Panc1 (cell line): ENCODE measurements at regions of chr19 and their contacts with region 1.

Region 1: DNA sequence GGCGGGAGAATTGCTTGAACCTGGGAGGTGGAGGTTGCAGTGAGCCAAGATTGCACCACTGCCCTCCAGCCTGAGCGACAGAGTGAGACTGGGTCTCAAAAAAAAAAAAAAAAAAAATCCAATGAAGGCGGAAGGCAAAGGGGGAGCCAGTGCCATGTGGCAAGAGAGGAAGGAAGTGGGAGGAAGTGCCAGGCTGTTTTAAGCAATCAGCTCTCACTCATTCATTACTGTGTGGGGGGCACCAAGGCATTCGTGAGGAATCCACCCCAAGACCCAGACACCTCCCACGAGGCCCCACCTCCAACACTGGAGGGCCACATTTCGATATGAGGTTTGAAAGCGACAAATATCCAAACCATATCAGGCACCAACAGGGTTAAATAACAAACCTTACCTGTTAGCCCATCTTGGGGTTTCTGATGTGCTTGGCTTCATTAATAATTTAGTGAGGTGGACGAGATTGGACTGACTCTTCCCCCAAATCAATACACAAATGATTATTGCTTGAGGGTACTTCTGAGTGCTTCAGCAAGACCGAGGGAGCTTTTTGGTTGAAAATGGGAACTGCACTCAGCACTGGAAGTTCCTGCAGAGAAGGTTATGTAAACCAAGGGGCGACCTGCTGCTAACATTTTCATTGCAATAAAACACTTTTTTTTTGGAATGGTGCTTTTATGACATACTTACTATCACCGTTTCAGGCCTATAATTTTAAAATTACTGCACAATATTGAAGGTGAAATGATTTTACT is 7.5 kb upstream of the LRP3 start:
- DNase-seq: no peak
- ATAC-seq: no peak
- H3K4me3 ChIP-seq: no peak overlapping the region
- H3K27ac ChIP-seq: no peak overlapping the region
- H3K4me1 ChIP-seq: peaks cover 4% of the 10 kb centered on the region
- H3K27me3 ChIP-seq: no peaks in the 10 kb centered on the region
- CTCF ChIP-seq: no peak

Region 2: GRCh38 chr19:33125929-33126388 is 60.6 kb before region 1 on chr19:
- CTCF ChIA-PET with region 1: interaction called, 15 read pairs
- POLR2A ChIA-PET with region 1: no interaction called
- in situ Hi-C with region 1: no loop called
- intact Hi-C with region 1: no loop called
- DNase-seq: peak; percentile 58
- ATAC-seq: peak; percentile 92
- H3K4me3 ChIP-seq: no peak overlapping the region
- H3K27ac ChIP-seq: peak overlapping the region; percentile 36; the same call in 1 of the 2 replicates
- H3K4me1 ChIP-seq: 0 out of 2 replicates have a peak, but pooled peaks cover 3% of the 10 kb centered on the region
- H3K27me3 ChIP-seq: no peaks in the 10 kb centered on the region
- CTCF ChIP-seq: peak; percentile 97

Region 3: DNA sequence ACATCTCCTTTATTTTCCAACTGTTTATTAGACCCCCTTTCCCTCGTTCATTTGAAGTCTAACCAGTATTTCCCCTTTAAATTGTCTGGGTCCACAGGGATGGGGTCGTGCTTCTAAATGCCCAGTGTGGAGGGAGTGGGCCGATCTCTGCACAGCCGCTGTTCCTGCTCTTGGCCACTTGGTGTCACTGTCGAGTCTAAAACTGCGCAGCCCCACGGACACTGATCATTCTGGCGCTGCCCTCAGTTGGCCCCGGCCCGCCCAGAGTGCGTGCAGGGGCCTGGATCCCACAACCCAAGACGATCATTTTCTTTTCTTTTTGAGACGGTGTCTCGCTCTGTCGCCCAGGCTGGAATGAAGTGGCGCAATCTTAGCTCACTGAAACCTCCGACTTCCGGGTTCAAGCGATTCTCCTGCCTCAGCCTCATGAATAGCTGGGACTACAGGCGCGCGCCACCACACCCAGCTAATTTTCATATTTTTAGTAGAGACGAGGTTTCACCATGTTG is 42.7 kb before region 1 on chr19:
- CTCF ChIA-PET with region 1: interaction called, 27 read pairs
- POLR2A ChIA-PET with region 1: no interaction called
- in situ Hi-C with region 1: no loop called
- intact Hi-C with region 1: loop called (anchors 1 kb)
- DNase-seq: peak; percentile 50
- ATAC-seq: peak; percentile 96
- H3K4me3 ChIP-seq: peak overlapping the region; percentile 15 to 50; a peak in 3 of 4 replicates
- H3K27ac ChIP-seq: peak overlapping the region; percentile 12
- H3K4me1 ChIP-seq: no peaks in the 10 kb centered on the region
- H3K27me3 ChIP-seq: no peaks in the 10 kb centered on the region
- CTCF ChIP-seq: peak; percentile 99